ENCODE measurements at regions of chr11 and their contacts with region 1.

Region 1: GRCh38 chr11:66842896-66843775 is at the start of gene RCE1:
- DNase-seq: peak in 1 of 2 experiments; percentile 96
- H3K4me3 ChIP-seq: peak within 1 kb of the TSS; percentile 79 to 92 (median 90)
- H3K27ac ChIP-seq: peak within 1 kb of the TSS; percentile 88
- H3K4me1 ChIP-seq: peaks cover 0 to 11% (median 3%) of the 10 kb centered on the region in 4 experiments; a peak in 4 of 7 replicates
- H3K27me3 ChIP-seq: no peaks in the 10 kb centered on the region
- CTCF ChIP-seq: no peak
- EP300 ChIP-seq: peak in 1 of 2 experiments; percentile 40; a peak in 1 of 3 replicates
- POLR2A ChIP-seq: peak; percentile 77 to 98
- RAD21 ChIP-seq: no peak
- total RNA-seq, gene RCE1: 33.7 and 35.8 TPM in 2 replicates

Region 2: DNA sequence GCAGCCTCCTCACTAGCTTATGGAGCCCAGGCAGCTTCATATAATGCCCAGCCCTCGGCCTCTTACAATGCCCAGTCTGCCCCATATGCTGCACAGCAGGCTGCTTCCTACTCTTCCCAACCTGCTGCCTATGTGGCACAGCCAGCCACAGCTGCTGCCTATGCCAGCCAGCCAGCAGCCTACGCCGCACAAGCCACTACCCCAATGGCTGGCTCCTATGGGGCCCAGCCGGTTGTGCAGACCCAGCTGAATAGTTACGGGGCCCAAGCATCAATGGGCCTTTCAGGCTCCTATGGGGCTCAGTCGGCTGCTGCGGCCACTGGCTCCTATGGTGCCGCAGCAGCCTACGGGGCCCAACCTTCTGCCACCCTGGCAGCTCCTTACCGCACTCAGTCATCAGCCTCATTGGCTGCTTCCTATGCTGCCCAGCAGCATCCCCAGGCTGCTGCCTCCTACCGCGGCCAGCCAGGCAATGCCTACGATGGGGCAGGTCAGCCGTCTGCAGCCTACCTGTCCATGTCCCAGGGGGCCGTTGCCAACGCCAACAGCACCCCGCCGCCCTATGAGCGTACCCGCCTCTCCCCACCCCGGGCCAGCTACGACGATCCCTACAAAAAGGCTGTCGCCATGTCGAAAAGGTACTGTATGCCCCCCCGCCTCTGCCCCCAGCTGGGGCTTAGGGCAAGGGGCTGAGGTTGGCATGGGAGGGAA is 217.9 kb before region 1 on chr11:
- CTCF ChIA-PET with region 1: no interaction called
- POLR2A ChIA-PET with region 1: no interaction called
- DNase-seq: no peak
- H3K4me3 ChIP-seq: no peak overlapping the region
- H3K27ac ChIP-seq: no peak overlapping the region
- H3K4me1 ChIP-seq: peaks cover 0 to 3% (median 0%) of the 10 kb centered on the region in 4 experiments; a peak in 1 of 7 replicates
- H3K27me3 ChIP-seq: no peaks in the 10 kb centered on the region
- CTCF ChIP-seq: no peak
- EP300 ChIP-seq: no peak
- POLR2A ChIP-seq: peak in 1 of 2 experiments; percentile 16; a peak in 1 of 3 replicates
- RAD21 ChIP-seq: no peak

Region 3: DNA sequence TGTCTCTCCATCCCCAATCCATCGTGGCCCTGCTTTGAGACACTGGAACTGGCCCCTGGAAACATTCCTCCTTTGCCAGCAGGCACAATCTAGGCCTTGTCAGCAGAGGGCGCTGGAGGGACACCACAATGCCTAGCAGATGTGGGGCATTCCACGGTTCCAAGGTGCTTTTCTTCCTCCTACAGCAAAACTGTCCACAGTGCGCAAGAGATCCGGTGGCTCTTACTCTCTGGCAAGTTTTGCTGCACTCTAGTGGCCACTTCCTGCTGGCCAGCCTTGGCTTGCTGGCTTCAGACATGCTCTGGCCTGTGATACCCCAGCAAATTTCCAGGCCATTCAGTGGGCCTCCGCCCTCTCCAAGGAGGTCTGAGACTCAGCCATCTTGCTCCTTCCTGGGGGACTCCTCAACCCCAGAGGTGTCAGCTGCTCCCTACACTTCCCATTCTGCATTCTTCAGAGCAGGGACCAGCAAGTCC is 148.4 kb before region 1 on chr11:
- CTCF ChIA-PET with region 1: interaction called, 12 read pairs
- POLR2A ChIA-PET with region 1: interaction called, 3 read pairs
- DNase-seq: peak; percentile 87 to 95
- H3K4me3 ChIP-seq: no peak overlapping the region
- H3K27ac ChIP-seq: 0 out of 2 replicates have a peak overlapping the region, but pooled peaks have one; percentile 30
- H3K4me1 ChIP-seq: peaks cover 0 to 3% (median 1%) of the 10 kb centered on the region in 4 experiments; a peak in 2 of 7 replicates
- H3K27me3 ChIP-seq: no peaks in the 10 kb centered on the region
- CTCF ChIP-seq: peak; percentile 77 to 100 (median 97)
- EP300 ChIP-seq: no peak
- POLR2A ChIP-seq: no peak
- RAD21 ChIP-seq: peak; percentile 92 to 94

Region 4: GRCh38 chr11:66855574-66856495 is 12.7 kb after region 1 on chr11:
- CTCF ChIA-PET with region 1: interaction called, 57 read pairs
- POLR2A ChIA-PET with region 1: interaction called, 53 read pairs
- DNase-seq: peak; percentile 78 to 94
- H3K4me3 ChIP-seq: peak overlapping the region; percentile 71 to 92 (median 86)
- H3K27ac ChIP-seq: peak overlapping the region; percentile 78
- H3K4me1 ChIP-seq: peaks cover 5 to 20% (median 9%) of the 10 kb centered on the region in 4 experiments
- H3K27me3 ChIP-seq: no peaks in the 10 kb centered on the region
- CTCF ChIP-seq: no peak
- EP300 ChIP-seq: no peak
- POLR2A ChIP-seq: peak in 1 of 2 experiments; percentile 70; a peak in 2 of 3 replicates
- RAD21 ChIP-seq: no peak; a peak in 1 of 4 replicates

Region 5: DNA sequence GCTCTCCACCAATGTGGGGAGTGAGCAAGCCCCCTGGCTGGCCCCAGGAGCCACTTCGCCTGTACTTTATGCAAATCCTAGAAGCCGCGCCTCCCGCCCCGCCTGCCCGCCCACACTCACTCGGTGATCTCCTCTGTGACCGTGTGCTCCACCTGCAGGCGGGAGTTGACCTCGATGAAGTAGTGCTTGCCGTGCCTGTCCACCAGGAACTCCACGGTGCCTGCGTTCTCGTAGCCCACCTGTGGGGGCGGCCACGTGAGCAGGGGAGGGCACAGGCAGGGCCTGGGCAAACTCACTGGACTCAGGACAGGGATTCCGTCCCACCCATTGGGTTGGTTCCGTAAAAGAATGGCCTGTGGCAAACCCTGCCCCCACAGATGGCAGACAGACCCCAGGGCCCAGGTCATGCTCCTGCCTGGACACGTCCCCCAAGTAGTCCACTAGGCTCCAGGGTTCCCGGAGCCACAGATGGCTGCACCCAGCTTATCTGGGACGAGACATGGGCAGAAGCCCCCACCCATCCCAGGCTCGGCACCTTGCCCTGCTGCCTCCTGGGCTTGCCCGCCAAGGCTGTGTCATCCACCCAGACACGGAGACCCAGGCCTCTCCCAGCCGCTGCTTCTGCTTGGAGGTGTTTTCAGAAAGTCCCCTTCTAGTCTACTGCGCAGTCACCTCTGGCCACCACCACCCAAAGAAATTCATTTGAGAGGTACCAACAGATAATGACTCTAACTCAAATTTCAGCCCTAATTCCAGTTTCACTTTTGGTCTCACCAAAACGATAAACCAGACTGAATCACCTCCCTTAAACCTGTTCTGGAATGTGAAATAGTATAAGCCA is 25.8 kb after region 1 on chr11:
- CTCF ChIA-PET with region 1: interaction called, 21 read pairs
- POLR2A ChIA-PET with region 1: interaction called, 7 read pairs
- DNase-seq: peak in 1 of 2 experiments; percentile 89
- H3K4me3 ChIP-seq: no peak overlapping the region
- H3K27ac ChIP-seq: no peak overlapping the region
- H3K4me1 ChIP-seq: peaks cover 0 to 12% (median 2%) of the 10 kb centered on the region in 4 experiments; a peak in 5 of 7 replicates
- H3K27me3 ChIP-seq: no peaks in the 10 kb centered on the region
- CTCF ChIP-seq: peak in 2 of 3 experiments; percentile 90 to 97; a peak in 3 of 4 replicates
- EP300 ChIP-seq: no peak
- POLR2A ChIP-seq: no peak
- RAD21 ChIP-seq: peak; percentile 50 to 62